AG04449 (cell line): ENCODE measurements at regions of chr3 and their contacts with region 1.

Region 1: DNA sequence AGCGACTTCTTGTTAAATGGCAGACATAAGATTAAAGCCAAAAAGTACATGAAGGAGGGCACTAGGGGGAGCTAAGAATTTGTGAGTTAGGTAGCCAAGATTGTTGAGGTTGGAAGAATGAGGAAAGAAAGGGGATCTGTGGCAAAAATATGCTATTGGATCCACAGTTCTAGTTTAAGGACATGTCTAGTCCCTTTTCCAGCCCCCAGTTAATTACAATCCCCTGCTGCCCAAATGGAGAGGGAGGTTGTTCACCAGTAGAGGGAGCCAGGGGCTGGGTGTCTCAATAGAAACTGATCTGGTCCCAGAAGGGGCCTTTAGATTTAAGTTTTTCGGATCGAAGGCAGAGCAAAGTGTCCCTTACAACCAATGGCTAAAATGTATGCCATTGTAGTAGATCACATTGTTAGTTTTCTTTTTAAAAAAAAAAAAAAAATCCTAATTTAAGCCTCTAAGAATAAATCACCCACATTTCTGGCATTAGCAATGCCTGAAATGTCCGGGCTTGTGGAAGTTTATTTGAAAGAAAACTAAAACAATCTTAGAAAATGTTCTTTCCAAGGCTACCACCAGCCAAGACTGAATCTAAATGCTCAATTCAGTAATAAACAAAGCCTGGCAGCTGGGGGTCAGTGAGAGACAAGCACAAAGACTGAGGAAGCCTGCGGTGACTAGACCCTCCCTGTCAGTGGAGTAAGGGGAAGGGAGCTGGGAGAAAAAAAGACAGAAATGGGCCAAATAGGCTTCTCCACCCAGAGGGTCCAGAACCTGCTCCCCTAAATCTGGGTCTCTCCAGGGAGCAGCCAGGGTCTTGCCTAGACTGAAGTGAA is 7.1 kb downstream of the COL8A1 start:
- DNase-seq: no peak
- H3K4me3 ChIP-seq: no peak overlapping the region
- CTCF ChIP-seq: peak; percentile 18

Region 2: DNA sequence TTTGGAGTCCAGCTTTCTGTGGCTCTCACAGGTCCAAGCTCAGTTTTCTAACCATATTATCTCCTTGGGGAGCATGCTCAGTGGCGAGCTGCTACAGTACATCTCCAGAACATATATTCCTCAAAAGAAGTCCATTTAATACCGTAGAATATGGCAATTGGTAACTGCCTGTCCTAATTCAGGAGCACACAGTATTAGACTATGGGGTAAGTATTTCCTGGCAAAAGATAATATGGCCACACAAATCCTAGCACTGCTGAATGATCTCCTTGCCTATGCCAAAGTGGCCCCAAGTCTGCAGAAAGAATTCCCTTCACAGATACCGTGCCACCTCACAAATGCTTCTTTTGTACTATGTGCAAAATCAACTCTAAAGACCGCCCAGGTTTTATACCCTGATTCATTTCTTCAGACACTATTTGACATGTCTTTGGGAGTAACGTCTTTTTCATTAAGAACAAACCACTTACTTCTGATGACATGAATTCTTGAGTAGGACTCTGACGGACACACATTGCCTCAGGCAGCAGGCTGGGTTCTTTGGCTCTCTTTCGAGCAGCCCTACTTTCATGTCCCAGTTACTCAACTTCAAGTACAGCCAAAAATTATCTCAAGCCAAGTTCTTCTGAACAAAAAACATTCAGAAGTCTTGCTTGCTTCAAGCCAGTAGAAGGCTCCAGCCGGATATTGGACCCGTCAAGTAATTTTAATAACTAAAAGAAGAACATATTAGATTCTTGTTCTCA is 375.7 kb before region 1 on chr3:
- CTCF ChIA-PET with region 1: no interaction called
- POLR2A ChIA-PET with region 1: no interaction called
- DNase-seq: no peak
- H3K4me3 ChIP-seq: no peak overlapping the region
- CTCF ChIP-seq: no peak

Region 3: DNA sequence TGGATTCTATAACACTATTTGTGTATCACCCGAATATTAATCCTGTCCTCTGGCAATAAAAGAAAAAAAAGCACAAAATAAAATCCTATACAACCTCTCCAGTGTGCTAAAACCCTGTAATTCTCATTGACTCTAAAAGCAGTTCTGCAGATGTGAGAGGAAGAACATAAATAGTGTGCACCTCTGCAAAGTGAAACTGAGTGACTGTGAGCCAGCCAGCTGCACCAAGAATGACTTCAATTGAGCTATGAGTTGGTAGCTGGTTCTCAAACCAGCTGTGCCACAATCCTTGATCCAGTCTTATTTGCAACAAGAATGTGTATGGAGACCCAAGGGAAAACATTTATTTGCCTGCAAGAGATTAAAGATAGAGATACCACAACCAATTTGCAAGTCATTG is 38.3 kb before region 1 on chr3:
- CTCF ChIA-PET with region 1: no interaction called
- POLR2A ChIA-PET with region 1: no interaction called
- DNase-seq: no peak
- H3K4me3 ChIP-seq: no peak overlapping the region
- CTCF ChIP-seq: no peak

Region 4: GRCh38 chr3:99656624-99657023 is 11.1 kb after region 1 on chr3:
- CTCF ChIA-PET with region 1: interaction called, 10 read pairs
- POLR2A ChIA-PET with region 1: no interaction called
- DNase-seq: no peak
- H3K4me3 ChIP-seq: no peak overlapping the region
- CTCF ChIP-seq: no peak